A673 (cell line): ENCODE measurements at regions of chr11 and their contacts with region 1.

Region 1: DNA sequence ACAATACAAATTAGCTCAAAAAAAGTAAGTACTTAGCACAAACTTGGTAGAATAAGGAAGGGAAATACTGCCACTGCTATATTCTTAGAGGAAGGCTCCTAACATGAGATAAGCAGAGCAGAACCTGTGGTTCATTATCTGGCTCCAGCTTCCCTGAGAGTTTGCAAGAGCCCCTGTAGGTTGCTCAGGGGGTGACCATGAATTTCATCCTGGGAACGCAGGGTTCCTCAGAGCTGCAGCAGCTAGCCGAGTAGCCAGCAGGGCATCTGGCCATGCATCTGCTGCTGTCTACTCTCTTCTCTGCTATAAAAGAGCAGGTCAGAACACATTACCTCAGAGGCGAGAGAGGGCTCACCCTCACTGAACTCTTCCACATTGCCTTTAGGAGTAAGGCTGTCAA is 67.3 kb downstream of the TRPC6 start:
- DNase-seq: no peak
- H3K4me3 ChIP-seq: no peak overlapping the region
- H3K27ac ChIP-seq: no peak overlapping the region
- H3K4me1 ChIP-seq: no peaks in the 10 kb centered on the region
- H3K27me3 ChIP-seq: peaks cover 27% of the 10 kb centered on the region
- CTCF ChIP-seq: no peak

Region 2: DNA sequence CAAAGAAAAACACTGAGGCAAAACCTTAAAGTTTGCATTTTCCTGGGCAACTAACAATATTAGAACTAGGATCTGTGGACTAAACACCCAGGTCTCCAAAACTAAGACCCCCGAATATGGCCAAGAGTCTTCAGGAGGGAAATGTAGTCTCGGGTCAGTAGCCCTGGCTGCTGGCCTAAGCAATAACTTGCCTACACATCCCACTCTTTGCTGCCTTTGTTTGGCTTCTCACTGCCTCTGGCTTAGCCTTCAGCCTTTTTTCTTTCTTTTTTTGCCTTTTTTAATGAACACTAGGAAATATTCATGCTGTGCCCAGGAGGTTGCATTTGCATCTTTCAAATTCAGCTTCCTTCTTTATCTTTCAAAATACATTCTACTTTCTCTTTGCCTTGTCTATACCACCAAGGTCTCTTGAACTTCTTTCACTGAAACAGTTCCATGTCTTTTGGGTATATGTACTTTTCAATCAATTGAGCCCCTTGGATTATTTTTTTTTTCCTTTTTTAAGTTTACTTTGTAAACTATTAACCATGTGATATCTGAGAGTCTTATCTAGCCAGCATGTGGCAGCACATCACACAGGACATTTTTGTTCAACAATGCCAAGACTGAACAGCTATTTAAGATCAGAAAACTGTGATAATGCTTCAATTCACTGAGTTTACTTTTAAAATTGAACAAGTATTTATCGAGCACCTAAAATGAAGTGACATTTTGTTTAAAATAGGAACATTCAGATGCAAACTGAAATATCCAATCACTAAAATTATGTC is 232.2 kb after region 1 on chr11:
- CTCF ChIA-PET with region 1: no interaction called
- POLR2A ChIA-PET with region 1: interaction called, 10 read pairs
- intact Hi-C with region 1: no loop called
- DNase-seq: no peak
- H3K4me3 ChIP-seq: no peak overlapping the region
- H3K27ac ChIP-seq: no peak overlapping the region
- H3K4me1 ChIP-seq: no peaks in the 10 kb centered on the region
- H3K27me3 ChIP-seq: no peaks in the 10 kb centered on the region
- CTCF ChIP-seq: no peak